Heart right ventricle (tissue), 16 donors: ENCODE measurements at regions of chr19 and their contacts with region 1.

Region 1: DNA sequence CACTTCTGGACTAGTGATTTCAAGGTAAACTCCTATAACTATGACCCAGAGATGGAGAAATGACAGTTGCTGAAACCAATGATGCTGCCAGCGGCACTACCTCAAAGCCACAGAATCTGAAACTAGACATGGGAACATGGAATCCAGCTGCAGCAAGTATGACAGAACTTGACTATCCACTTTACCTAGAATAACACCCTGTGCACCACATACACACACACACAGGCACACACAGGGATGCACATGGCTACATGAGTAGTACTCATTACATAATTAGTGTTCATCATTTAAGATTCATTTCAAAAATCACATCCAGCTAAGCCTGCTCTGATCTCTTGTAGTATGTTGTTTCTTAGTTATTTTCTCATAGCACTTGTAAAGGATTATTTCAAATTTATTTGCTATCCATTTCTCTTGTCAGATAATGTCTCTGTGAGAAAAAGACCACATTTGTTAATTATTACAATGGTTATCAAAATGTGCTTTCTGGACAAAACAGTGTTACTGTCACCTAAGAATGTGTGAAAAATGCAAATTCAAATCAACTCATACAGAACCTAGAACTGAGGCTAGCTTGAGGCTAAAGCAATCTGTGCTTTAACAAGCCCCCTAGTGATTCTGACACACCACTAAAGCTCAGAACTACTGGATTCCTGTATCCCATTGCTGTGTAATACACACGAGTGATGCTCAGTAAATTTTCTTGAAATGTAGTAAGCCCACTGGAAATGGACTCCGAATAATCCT is 59.4 kb downstream of the WTIP start:
- DNase-seq: no peak
- ATAC-seq: no peak
- H3K4me3 ChIP-seq: no peak overlapping the region
- H3K27ac ChIP-seq: no peak overlapping the region
- H3K4me1 ChIP-seq: no peaks in the 10 kb centered on the region
- H3K27me3 ChIP-seq: peaks cover 0 to 9% (median 0%) of the 10 kb centered on the region in 7 donors
- CTCF ChIP-seq: no peak

Region 2: DNA sequence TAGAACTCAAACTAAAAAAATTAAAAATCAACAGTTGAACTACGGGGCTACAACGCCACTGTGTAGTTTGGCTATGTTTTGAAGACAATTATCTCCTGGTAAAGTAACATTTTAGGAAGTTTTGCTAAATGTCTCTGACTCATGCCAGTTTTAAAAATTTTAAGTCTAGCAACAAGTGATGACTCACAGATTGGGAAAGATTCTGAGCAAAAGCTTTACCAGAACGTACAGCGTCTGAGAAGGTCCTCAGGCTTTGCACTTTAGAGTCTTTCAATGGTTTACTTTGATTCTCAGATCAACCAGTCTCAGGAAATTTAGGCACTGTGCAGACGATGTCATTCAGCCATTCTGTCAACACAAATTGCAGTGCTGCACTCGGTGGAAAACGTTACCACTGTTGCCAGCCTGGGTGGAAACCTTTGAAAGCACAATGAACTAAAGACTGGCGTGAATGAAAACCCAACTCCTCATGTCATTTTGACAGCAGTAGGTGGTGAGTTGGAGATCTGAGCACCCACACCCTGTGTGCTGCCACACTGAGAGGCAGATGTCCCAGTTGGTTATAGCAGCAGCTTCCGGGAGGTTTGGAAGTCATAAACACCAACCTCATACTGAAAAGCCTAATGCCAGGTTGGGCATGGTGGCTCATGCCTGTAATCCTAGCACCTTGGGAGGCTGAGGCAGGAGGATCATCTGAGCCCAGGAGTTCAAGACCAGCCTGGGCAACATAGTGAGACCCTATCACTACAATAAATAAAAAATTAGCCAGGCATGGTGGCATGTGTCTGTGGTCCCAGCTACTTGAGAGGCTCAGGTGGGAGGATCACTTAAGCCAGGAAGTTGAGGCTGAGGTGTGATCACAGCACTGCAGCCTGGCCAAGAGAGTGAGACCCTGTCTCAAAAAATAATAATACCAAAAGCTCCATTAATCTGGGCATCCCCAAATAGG is 65.7 kb before region 1 on chr19:
- intact Hi-C with region 1: no loop called
- DNase-seq: no peak
- ATAC-seq: peak in 1 of 8 donors; percentile 69
- H3K4me3 ChIP-seq: no peak overlapping the region
- H3K27ac ChIP-seq: peak overlapping the region in 2 of 10 donors; percentile 2 to 56
- H3K4me1 ChIP-seq: peaks cover 0 to 21% (median 0%) of the 10 kb centered on the region in 9 donors
- H3K27me3 ChIP-seq: peaks cover 0 to 14% (median 0%) of the 10 kb centered on the region in 7 donors
- CTCF ChIP-seq: no peak

Region 3: GRCh38 chr19:34744896-34745690 is 204.1 kb after region 1 on chr19:
- intact Hi-C with region 1: loop called in 1 of 10 experiments (anchors 2 kb)
- DNase-seq: no peak
- ATAC-seq: no peak
- H3K4me3 ChIP-seq: no peak overlapping the region
- H3K27ac ChIP-seq: no peak overlapping the region
- H3K4me1 ChIP-seq: no peaks in the 10 kb centered on the region
- H3K27me3 ChIP-seq: no peaks in the 10 kb centered on the region
- CTCF ChIP-seq: no peak